ENCODE measurements at regions of chr1 and their contacts with region 1.

Region 1: DNA sequence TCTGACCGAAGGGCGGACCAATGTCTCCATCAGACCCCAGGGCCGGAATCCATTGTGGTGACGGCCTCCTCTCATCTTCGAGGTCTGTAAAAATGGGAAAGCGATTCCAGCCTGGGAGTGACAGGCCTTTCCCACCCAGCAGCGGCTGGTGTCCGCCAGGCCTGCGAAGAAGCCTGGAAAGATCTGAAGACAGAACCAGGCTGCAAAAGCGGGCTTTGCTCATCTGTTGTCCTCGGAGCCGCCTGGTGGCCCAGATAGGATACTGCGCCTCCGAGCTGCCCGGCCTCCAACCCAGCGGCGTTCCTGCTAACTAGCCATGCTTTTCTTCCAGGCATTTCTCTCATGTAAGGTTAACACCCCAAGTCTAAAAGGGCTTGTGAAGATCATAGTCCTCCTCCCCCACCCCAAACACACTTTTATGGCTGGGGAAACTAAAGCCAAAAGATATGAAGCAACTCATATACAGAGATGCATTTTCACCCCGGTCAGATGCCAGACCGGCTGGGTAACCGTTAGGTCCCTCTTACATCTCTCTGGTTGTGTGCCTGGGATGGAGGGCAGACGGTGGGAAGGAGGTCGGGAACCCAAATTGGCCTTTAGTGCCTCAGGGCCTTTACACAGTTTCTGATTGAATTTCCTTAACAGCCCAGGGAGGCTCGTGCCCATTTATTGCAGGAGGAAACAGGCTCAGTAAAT is 1.9 kb upstream of the DHRS3 start:
- DNase-seq: peak; percentile 85
- H3K4me3 ChIP-seq: no peak overlapping the region
- H3K27ac ChIP-seq: peak overlapping the region; percentile 73
- H3K4me1 ChIP-seq: peaks cover 27% of the 10 kb centered on the region
- H3K27me3 ChIP-seq: no peaks in the 10 kb centered on the region
- CTCF ChIP-seq: peak; percentile 92 to 96
- POLR2A ChIP-seq: no peak

Region 2: DNA sequence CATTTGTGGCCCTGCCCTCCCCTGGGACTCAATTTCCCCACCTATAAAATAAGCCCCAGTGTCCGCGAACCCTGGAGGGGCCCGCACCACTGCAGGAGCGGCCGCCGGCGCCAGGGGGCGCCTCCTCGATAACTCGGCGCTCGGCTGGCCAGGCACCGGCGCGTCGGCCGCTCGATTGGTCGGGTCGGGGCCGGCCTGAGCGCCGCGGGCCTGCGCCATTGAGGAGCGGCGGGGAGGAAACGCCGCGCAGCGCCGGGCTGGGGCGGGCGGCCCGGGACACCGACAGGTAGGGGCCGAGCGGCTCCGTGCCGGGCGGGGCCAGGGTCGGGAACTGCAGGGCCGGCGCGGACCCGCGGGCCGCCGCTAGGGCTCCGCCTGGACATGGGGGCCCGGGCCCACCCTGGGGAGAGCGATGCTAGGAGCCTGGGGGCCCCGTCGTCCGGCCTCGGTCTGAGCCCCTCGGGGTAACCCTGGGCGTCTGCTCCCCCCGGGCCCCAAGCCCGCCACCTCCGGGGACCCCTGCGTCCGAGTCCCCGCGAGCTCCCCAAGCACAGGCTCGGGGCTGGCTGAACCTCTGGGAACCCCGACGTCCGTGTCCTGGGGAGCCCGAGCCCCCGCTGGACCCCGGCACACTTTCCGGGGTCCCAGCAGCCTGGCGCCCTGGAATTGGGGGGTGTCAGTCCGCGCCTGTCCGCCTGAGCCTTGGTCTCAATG is 389.9 kb before region 1 on chr1 and contains the start of gene VPS13D:
- CTCF ChIA-PET with region 1: no interaction called
- POLR2A ChIA-PET with region 1: no interaction called
- dilution Hi-C with region 1: no loop called
- intact Hi-C with region 1: loop called (anchors 2 kb)
- DNase-seq: peak; percentile 59
- H3K4me3 ChIP-seq: peak within 1 kb of the TSS; percentile 59 to 75 (median 73)
- H3K27ac ChIP-seq: peak within 1 kb of the TSS; percentile 20
- H3K4me1 ChIP-seq: peaks cover 6% of the 10 kb centered on the region
- H3K27me3 ChIP-seq: no peaks in the 10 kb centered on the region
- CTCF ChIP-seq: peak; percentile 91 to 99
- POLR2A ChIP-seq: peak; percentile 68
- total RNA-seq, gene VPS13D: 41.7 and 48.5 TPM in 2 replicates

Region 3: GRCh38 chr1:12320516-12320915 is 299.4 kb before region 1 on chr1:
- CTCF ChIA-PET with region 1: interaction called, 131 read pairs
- POLR2A ChIA-PET with region 1: interaction called, 3 read pairs
- dilution Hi-C with region 1: no loop called
- intact Hi-C with region 1: no loop called
- DNase-seq: no peak
- H3K4me3 ChIP-seq: no peak overlapping the region
- H3K27ac ChIP-seq: no peak overlapping the region
- H3K4me1 ChIP-seq: no peaks in the 10 kb centered on the region
- H3K27me3 ChIP-seq: no peaks in the 10 kb centered on the region
- CTCF ChIP-seq: no peak
- POLR2A ChIP-seq: no peak

Region 4: DNA sequence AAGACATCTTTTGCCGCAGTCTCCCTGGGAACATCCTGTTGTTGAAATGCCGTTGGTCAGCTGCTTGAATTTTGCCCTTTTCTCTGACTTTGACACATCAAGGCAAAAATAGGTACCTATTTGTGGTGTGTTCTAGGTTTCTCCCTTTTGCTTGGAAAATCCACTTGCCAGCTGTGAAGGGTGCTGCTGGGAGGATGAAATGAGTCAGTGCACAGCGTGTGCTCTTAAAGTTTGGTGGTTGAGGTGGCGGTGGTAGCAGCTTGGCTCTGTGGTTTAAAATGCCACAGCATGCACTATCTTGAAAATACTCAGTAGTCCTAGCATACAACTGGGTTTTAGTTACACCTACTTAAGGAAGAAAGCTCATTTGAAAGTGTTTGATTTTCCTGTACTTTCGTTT is 185.8 kb before region 1 on chr1:
- CTCF ChIA-PET with region 1: interaction called, 12 read pairs
- POLR2A ChIA-PET with region 1: interaction called, 10 read pairs
- dilution Hi-C with region 1: no loop called
- intact Hi-C with region 1: loop called (anchors 1 kb)
- DNase-seq: peak; percentile 88
- H3K4me3 ChIP-seq: peak overlapping the region in 1 of 3 experiments; percentile 46
- H3K27ac ChIP-seq: peak overlapping the region; percentile 88
- H3K4me1 ChIP-seq: peaks cover 55% of the 10 kb centered on the region
- H3K27me3 ChIP-seq: no peaks in the 10 kb centered on the region
- CTCF ChIP-seq: no peak
- POLR2A ChIP-seq: no peak

Region 5: DNA sequence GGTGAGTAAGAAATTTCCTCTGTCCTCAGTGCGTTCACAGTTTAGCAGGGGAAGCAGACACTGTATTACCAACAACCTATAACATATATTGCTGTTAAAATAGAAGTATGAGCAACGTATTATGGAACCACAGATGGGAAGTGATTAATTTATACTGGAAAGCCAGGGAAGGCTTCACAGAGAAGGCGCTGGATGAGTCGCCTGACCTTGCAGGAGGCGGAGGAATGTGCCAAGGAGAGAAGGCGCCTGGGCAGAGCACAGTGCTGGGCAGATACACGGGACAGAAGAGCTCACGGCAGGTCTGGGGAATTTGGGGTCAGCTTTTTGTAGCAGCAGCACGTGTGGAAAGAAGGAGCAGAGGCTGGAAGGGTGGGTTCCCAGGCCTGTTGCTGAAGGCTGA is 118.3 kb before region 1 on chr1:
- CTCF ChIA-PET with region 1: interaction called, 6 read pairs
- POLR2A ChIA-PET with region 1: interaction called, 3 read pairs
- dilution Hi-C with region 1: no loop called
- intact Hi-C with region 1: loop called (anchors 1 kb)
- DNase-seq: peak; percentile 76
- H3K4me3 ChIP-seq: no peak overlapping the region
- H3K27ac ChIP-seq: no peak overlapping the region
- H3K4me1 ChIP-seq: peaks cover 9% of the 10 kb centered on the region
- H3K27me3 ChIP-seq: no peaks in the 10 kb centered on the region
- CTCF ChIP-seq: no peak
- POLR2A ChIP-seq: no peak

Region 6: DNA sequence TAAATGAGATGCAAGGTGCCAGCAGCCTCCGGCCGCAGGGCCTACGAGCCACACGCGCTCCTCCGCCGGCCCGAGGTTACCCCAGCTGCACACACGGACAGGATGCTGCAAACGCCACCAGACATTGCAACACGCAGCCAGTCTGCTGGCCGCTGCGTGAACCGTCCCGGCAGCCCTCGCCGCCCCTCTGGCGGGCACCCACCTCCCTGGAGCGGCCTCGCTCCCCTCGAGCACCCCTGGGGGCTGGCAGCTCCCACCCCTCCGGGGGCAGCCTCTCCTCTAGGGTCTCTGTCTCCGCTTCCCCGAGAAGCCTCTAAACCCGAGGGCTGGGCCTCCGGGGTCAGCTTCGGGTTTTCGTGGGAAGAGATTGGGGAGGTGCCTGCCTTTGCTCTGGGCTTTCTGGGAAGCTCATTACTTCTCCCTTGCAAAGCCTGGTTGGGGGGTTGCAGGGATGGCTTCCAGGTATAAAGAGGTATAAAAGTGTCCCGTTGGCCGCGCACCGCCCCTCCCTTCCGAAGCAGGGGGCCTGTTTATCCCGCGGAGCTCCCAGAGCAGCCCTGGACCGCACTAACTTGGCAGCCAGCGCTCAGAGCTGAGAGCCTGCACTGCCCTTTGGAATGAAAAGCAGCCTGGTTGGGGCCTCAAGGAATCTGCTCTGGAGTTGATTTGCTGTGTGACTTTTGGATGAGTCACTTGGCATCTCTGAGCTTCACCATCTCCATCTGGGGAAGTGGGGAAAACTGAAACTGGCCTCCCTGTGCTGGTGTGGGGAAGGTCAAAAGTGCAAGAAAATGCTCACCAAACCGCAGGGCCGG is 23.7 kb before region 1 on chr1:
- CTCF ChIA-PET with region 1: interaction called, 112 read pairs
- POLR2A ChIA-PET with region 1: interaction called, 9 read pairs
- dilution Hi-C with region 1: no loop called
- intact Hi-C with region 1: loop called (anchors 1 kb)
- DNase-seq: peak; percentile 96
- H3K4me3 ChIP-seq: no peak overlapping the region
- H3K27ac ChIP-seq: peak overlapping the region; percentile 93
- H3K4me1 ChIP-seq: peaks cover 28% of the 10 kb centered on the region
- H3K27me3 ChIP-seq: no peaks in the 10 kb centered on the region
- CTCF ChIP-seq: no peak
- POLR2A ChIP-seq: peak; percentile 12

Region 7: GRCh38 chr1:12658531-12659453 is 38.9 kb after region 1 on chr1:
- CTCF ChIA-PET with region 1: interaction called, 45 read pairs
- POLR2A ChIA-PET with region 1: no interaction called
- dilution Hi-C with region 1: no loop called
- intact Hi-C with region 1: loop called (anchors 1 kb)
- DNase-seq: peak; percentile 84
- H3K4me3 ChIP-seq: no peak overlapping the region
- H3K27ac ChIP-seq: no peak overlapping the region
- H3K4me1 ChIP-seq: no peaks in the 10 kb centered on the region
- H3K27me3 ChIP-seq: peaks cover 0 to 8% of the 10 kb centered on the region in 2 experiments
- CTCF ChIP-seq: peak; percentile 86 to 96
- POLR2A ChIP-seq: no peak

Measured in endothelial cell of umbilical vein (primary cell).